ENCODE measurements at regions of chr5 and their contacts with region 1.

Region 1: DNA sequence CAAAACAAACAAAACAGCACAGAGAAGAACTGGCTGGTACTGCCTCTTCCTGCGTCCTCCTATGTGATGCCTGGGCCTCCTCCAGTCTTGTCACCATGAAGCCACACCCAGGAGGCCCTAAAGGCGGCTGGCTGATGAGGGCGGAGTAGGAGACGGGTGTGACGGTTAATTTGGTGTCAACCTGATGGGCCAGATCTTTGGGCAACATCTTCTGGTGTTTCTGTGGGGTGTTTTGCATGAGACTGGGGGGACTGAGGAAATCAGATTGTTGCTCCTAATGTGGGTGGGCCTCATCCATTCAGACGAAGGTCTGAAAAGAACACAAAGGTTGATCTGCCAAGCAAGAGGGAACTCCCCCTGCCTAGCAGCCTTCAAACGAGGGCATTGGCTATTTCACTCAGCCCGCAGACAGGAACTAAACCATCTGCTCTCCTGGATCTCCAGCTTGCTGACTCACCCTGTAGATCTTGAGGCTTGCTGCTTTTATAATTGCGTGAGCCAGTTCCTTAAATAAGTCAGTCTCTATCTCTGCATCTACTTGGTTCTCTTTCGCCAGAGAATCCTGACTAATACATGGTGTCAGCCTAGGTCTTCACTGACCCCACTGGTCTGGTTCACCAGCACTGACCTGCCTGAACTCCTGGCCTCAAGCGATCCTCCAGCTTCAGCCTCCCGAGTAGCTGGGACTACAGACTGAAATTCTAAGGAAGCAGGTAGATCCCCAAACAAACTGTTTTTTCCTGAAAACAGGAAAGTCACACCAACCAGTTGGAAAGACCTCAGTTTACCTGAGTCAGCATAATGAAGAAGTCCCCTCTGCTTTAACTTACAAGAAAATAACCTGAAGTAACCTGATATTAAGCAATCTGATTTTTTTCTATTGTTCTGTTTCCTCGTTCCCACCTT is 12.8 kb upstream of the ZFP62 start:
- DNase-seq: no peak
- H3K4me3 ChIP-seq: peak overlapping the region in 1 of 8 donors; percentile 18
- H3K27ac ChIP-seq: peak overlapping the region in 5 of 8 donors; percentile 17 to 79 (median 70)
- H3K4me1 ChIP-seq: peaks cover 0 to 17% (median 2%) of the 10 kb centered on the region in 6 donors
- H3K27me3 ChIP-seq: no peaks in the 10 kb centered on the region
- CTCF ChIP-seq: no peak
- POLR2A ChIP-seq: no peak

Region 2: GRCh38 chr5:180540050-180540694 is 333.7 kb before region 1 on chr5:
- intact Hi-C with region 1: no loop called
- DNase-seq: no peak
- H3K4me3 ChIP-seq: no peak overlapping the region
- H3K27ac ChIP-seq: no peak overlapping the region
- H3K4me1 ChIP-seq: no peaks in the 10 kb centered on the region
- H3K27me3 ChIP-seq: no peaks in the 10 kb centered on the region
- CTCF ChIP-seq: no peak
- POLR2A ChIP-seq: no peak

Region 3: DNA sequence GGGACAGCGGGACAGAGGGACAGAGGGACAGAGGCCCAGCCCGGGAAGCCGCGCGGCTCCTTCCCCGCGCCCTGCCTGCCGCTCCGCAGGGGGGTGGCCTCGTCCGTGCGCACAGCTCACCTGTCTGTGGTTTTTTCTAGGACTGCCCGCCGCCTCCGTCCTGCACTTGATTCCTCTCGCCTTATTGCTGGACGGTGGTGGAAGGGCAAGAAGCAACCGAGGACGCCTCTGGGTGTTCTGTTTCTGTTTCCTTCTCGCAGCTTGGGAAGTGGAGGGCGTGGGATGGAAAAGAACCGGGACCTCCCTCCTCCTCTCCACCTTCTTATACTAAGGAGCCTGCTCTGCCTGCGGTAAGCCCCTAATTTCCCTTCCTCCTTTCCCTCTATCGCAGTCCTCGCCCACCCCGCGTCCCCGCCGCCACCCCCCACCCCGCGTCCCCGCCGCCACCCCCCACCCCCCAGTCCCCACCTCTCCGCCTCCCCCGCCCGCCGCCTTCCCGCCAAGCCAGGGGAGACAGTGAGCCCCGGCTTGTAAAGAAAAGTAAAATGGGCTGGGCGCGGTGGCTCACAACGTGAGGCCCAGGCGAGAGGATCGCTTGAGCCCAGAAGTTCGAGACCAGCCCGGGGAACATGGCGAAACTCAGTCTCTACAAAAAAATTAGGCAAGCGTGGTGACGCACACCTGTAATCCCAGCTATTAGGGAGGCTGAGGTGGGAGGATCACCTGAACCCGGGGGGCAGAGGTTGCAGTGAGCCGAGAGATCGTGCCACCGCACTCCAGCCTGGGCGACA is 214.9 kb before region 1 on chr5:
- intact Hi-C with region 1: no loop called
- DNase-seq: no peak
- H3K4me3 ChIP-seq: peak overlapping the region in 3 of 8 donors; percentile 10 to 38 (median 17)
- H3K27ac ChIP-seq: no peak overlapping the region
- H3K4me1 ChIP-seq: no peaks in the 10 kb centered on the region
- H3K27me3 ChIP-seq: peaks cover 0 to 69% (median 0%) of the 10 kb centered on the region in 7 donors
- CTCF ChIP-seq: no peak
- POLR2A ChIP-seq: no peak

Region 4: DNA sequence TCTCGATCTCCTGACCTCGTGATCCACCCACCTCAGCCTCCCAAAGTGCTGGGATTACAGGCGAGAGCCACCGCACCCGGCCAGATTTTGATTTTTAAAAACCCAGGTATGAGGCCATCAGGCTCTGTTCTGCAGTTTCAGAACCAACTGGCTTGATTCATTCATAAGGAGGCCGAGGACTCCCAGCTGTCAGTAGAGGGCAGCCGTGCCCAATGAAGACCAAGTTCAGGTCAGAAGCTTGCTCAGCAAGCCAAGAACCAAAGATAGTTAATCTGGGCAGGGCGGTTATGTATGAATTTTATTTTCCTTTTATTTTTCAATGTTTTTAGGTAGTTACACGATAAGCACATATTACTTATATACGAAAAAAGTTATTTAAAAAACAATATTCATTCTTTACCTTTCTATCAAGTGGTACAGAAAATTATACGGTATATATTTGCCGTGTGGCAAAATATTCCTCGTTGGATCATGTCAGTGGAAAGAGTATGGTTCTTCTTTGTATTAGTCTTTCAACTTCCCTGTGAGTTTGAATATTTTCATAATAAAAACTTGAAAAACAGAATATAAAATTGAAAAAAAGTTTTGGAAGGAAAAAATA is 89.3 kb before region 1 on chr5:
- intact Hi-C with region 1: loop called (anchors 5 kb)
- DNase-seq: peak; percentile 91
- H3K4me3 ChIP-seq: no peak overlapping the region
- H3K27ac ChIP-seq: peak overlapping the region in 4 of 8 donors; percentile 42 to 77 (median 67)
- H3K4me1 ChIP-seq: peaks cover 25 to 54% (median 51%) of the 10 kb centered on the region in 6 donors
- H3K27me3 ChIP-seq: no peaks in the 10 kb centered on the region
- CTCF ChIP-seq: peak; percentile 36 to 81 (median 70)
- POLR2A ChIP-seq: no peak

Region 5: DNA sequence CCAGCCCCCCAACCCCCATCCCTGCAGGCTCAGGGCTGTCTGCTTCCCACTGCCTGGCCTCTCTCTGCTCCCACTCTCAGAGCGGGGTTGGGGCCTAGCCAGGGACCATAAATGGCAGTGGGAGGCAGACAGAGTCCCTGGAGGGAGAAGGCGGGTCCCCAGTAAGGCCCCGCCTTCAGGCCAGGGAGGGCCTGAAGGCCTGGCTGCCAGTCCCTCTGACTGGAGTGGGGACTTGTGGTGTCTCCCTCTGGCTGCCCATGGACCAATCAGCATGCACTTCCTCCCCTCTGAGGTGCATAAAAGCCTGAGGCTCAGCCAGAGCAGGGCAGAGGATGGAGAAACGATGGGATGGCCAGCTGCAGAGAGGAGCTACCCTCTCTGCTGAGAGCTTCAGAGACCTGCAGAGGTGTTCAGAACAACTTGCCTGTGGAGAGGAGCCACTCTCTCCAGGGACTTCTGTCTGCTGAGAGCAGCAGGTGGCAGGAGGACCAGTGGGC is 163.5 kb after region 1 on chr5:
- intact Hi-C with region 1: loop called (anchors 10 kb)
- DNase-seq: peak; percentile 23
- H3K4me3 ChIP-seq: no peak overlapping the region
- H3K27ac ChIP-seq: no peak overlapping the region
- H3K4me1 ChIP-seq: peaks cover 0 to 14% (median 0%) of the 10 kb centered on the region in 6 donors
- H3K27me3 ChIP-seq: peaks cover 0 to 55% (median 0%) of the 10 kb centered on the region in 7 donors
- CTCF ChIP-seq: no peak
- POLR2A ChIP-seq: no peak